Mammary epithelial cell (primary cell): ENCODE measurements at regions of chr19 and their contacts with region 1.

Region 1: DNA sequence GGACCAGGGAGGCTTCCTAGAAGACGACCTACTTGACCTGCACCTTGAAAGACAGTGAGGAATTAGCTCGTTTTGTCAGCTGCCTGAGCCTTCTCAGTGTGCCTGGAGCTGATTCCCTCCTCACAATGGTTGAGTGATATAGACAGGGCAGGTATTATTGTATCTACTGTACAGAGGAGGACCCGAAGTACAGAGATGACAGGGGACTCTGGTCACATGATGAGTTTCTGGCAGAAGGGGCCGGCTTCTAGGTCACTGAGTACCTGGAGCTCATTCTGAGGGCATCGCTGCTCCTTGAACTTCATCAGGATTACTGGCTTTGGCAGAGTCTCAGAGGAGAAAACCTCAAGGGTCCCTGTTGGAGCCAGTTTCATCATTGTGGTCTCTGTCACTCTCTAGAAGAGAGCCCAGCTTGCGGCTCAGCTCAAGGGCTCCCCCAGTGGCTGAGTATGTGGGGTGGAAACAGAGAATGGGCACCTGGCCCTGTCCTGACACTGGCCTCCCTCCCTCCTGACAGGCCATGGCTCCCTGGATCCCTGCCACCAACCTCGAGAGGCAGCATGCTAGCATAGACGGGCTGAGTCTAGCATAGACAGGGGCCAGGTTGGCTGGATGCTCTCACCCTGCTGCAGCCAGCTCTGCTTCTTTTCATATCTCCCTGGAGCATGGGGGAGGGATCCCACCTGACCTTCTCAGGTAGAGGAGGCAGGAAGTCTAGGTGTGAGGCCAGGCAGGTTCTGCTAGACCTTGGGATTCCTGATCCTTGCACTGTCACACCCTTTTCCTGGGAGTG is 38.7 kb downstream of the NFIX start:
- DNase-seq: peak; percentile 68
- H3K4me3 ChIP-seq: peak overlapping the region in 1 of 3 experiments; percentile 8
- H3K27ac ChIP-seq: peak overlapping the region; percentile 97
- H3K4me1 ChIP-seq: peaks cover 93% of the 10 kb centered on the region
- H3K27me3 ChIP-seq: no peaks in the 10 kb centered on the region
- CTCF ChIP-seq: peak; percentile 92 to 94

Region 2: DNA sequence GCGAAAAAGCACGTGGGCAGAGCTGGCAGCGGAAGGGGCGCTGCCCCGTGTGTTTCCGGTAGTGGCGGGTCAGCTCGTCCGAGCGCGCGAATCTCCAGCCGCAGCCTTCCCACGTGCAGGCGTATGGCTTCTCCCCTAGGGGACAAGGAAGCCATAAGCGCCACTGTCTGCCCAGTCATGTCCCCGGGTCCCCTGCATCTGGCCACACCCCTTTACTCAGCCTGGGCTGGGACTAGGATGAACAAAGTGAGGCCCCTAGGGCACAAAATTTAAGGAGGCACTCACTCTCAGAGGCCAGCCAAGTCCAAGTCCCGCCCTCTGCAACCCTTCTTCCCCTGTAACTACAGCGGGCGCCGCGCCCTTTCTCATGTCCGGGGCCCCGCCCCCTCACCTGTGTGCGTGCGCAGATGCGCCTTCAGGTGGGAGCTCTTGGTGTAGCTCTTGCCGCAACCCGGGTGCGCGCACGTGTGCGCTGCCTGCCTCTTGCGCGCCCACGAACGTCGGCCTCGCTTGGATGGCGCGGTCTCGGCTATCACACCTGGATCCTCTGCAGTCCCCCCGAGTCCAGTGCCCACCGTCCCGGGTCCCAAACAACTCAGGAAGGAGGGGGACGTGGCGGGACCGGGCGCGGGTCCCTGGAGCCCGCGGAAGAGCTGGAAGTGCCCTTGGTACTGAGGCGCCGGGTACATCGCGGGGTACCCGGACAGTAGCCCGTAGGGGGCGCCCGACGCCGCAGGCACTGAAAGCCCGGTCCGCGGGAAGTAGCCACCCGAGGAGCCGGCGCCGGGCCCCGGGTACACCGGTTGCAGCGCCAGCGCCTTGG is 148.9 kb before region 1 on chr19:
- CTCF ChIA-PET with region 1: no interaction called
- dilution Hi-C with region 1: no loop called
- in situ Hi-C with region 1: no loop called
- intact Hi-C with region 1: loop called (anchors 5 kb)
- DNase-seq: peak; percentile 80
- H3K4me3 ChIP-seq: peak overlapping the region; percentile 19 to 47 (median 28)
- H3K27ac ChIP-seq: no peak overlapping the region
- H3K4me1 ChIP-seq: peaks cover 17% of the 10 kb centered on the region
- H3K27me3 ChIP-seq: no peaks in the 10 kb centered on the region
- CTCF ChIP-seq: peak; percentile 21 to 43

Region 3: DNA sequence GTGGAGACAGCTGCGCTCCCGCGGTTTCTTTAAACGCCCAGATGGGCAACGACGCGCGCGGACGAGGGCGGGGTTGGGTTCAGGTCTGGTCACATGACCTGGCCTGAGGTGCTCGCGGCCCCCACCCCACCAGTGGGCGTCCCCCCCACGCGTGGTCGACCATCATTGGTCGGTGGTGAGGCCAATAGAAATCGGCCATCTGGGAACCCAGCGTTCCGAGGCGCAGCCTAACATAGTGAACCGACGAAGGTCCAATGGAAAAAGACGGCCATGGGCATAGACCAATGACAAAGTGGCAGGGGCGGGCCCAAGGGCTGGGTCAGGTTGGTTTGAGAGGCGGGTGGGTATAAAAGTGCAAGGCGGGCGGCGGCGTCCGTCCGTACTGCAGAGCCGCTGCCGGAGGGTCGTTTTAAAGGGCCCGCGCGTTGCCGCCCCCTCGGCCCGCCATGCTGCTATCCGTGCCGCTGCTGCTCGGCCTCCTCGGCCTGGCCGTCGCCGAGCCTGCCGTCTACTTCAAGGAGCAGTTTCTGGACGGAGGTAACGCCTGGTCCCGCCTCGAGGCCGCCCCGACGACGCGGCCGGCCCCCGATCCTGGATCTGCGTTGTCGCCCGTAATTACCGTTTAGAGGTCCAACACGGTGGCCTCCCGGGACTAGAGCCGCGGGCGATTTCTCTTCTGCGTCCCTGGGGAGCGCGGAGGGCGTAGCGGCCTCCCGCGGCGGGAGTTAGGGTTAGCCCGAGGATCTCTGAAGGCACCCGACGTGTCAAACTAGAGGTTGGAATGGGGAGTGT is 95.6 kb before region 1 on chr19 and contains the start of gene CALR:
- CTCF ChIA-PET with region 1: no interaction called
- dilution Hi-C with region 1: loop called (anchors 5 kb)
- in situ Hi-C with region 1: no loop called
- intact Hi-C with region 1: no loop called
- DNase-seq: peak; percentile 99
- H3K4me3 ChIP-seq: peak within 1 kb of the TSS; percentile 82 to 99 (median 98)
- H3K27ac ChIP-seq: peak within 1 kb of the TSS; percentile 78
- H3K4me1 ChIP-seq: peaks cover 29% of the 10 kb centered on the region
- H3K27me3 ChIP-seq: no peaks in the 10 kb centered on the region
- CTCF ChIP-seq: peak in 1 of 2 donors; percentile 35
- total RNA-seq, gene CALR: 1,117 to 1,135 TPM

Region 4: DNA sequence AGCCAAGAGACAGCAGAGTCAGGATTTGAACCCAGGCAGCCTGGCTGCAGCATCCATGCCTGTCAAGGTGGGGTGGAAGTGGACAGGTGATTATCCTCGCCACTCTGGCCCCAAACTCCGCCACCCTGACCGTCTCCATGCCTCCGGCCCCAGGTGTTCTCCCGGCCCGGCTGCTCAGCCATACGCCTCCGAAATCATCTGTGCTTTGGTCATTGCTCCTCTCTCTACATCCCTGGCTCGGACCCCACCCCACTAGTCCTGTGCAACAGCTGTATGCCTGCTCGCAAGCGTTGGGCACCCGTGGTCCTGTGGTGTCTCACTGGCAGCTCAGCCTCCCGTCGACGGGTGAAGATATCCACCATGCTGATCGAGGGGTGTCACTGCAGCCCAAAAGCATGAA is 60.8 kb before region 1 on chr19:
- CTCF ChIA-PET with region 1: no interaction called
- dilution Hi-C with region 1: no loop called
- in situ Hi-C with region 1: no loop called
- intact Hi-C with region 1: no loop called
- DNase-seq: no peak
- H3K4me3 ChIP-seq: no peak overlapping the region
- H3K27ac ChIP-seq: no peak overlapping the region
- H3K4me1 ChIP-seq: no peaks in the 10 kb centered on the region
- H3K27me3 ChIP-seq: peaks cover 3% of the 10 kb centered on the region
- CTCF ChIP-seq: no peak

Region 5: GRCh38 chr19:12983542-12984142 is 50.4 kb before region 1 on chr19:
- CTCF ChIA-PET with region 1: no interaction called
- dilution Hi-C with region 1: no loop called
- in situ Hi-C with region 1: no loop called
- intact Hi-C with region 1: loop called (anchors 1 kb)
- DNase-seq: peak; percentile 73
- H3K4me3 ChIP-seq: peak overlapping the region in 1 of 3 experiments; percentile 34
- H3K27ac ChIP-seq: peak overlapping the region; percentile 50
- H3K4me1 ChIP-seq: peaks cover 5% of the 10 kb centered on the region
- H3K27me3 ChIP-seq: no peaks in the 10 kb centered on the region
- CTCF ChIP-seq: peak; percentile 73 to 91

Region 6: GRCh38 chr19:12994701-12995595 is 39.1 kb before region 1 on chr19 and contains the start of gene NFIX:
- CTCF ChIA-PET with region 1: no interaction called
- dilution Hi-C with region 1: no loop called
- in situ Hi-C with region 1: loop called (anchors 5 kb)
- intact Hi-C with region 1: no loop called
- DNase-seq: peak; percentile 62
- H3K4me3 ChIP-seq: peak within 1 kb of the TSS; percentile 55 to 97 (median 91)
- H3K27ac ChIP-seq: peak within 1 kb of the TSS; percentile 47
- H3K4me1 ChIP-seq: peaks cover 19% of the 10 kb centered on the region
- H3K27me3 ChIP-seq: no peaks in the 10 kb centered on the region
- CTCF ChIP-seq: no peak
- total RNA-seq, gene NFIX: 43.2 to 76.1 TPM

Region 7: DNA sequence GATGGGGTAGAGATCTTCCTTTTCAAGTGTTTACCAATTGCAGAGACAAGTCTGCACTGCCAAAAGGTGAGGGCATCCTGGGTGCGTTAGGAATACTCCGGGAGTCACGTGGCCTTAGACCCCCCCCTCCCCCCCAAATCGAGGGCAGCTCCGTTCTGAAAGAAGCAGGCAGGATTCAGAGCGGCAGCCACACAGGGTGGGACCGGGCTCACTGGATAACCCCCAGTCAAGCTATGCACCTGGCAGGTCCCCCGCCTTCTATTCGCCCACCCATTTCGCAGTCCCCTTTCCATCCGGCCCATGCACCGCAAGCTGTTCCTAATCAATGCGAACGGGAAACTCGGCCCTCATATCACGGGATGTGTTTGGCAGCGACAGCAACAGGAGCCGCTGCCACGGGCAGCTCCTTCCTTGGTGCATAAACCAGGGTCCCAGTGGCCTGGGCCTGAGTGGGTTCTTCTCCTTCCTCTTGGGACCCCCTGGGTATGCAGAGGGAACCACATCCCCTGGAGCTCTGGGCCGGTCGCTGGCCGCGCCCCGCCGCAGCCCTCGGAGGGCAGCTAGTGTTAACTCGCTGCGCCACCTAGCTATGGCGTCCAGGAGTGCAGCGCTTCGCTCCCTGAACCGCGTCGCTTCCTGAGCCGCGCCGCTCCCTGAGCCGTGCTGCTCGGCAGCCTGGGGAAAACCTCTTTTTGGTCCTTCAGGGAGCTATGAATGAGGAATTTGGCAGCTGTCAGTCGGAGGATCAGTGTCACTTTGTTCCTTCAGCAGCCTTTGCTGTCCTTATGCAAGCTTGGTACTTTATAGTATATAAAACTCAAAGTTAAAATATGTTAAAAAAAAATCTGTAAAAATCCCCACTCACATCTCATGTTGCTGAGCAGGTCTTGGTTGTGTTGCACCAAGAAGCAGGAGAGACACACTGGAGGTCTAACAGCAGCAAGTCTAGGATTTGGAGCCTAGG is 27.2 kb after region 1 on chr19:
- CTCF ChIA-PET with region 1: interaction called, 15 read pairs
- dilution Hi-C with region 1: loop called (anchors 5 kb)
- in situ Hi-C with region 1: no loop called
- intact Hi-C with region 1: loop called (anchors 1 kb)
- DNase-seq: peak; percentile 67
- H3K4me3 ChIP-seq: peak overlapping the region; percentile 20 to 23 (median 23)
- H3K27ac ChIP-seq: peak overlapping the region; percentile 77
- H3K4me1 ChIP-seq: peaks cover 35% of the 10 kb centered on the region
- H3K27me3 ChIP-seq: no peaks in the 10 kb centered on the region
- CTCF ChIP-seq: peak; percentile 84 to 97

Region 8: GRCh38 chr19:13086341-13086740 is 52.3 kb after region 1 on chr19:
- CTCF ChIA-PET with region 1: no interaction called
- dilution Hi-C with region 1: no loop called
- in situ Hi-C with region 1: no loop called
- intact Hi-C with region 1: no loop called
- DNase-seq: no peak
- H3K4me3 ChIP-seq: no peak overlapping the region
- H3K27ac ChIP-seq: no peak overlapping the region
- H3K4me1 ChIP-seq: no peaks in the 10 kb centered on the region
- H3K27me3 ChIP-seq: no peaks in the 10 kb centered on the region
- CTCF ChIP-seq: no peak